Sigmoid colon (tissue), 7 donors: ENCODE measurements at regions of chr4 and their contacts with region 1.

Region 1: DNA sequence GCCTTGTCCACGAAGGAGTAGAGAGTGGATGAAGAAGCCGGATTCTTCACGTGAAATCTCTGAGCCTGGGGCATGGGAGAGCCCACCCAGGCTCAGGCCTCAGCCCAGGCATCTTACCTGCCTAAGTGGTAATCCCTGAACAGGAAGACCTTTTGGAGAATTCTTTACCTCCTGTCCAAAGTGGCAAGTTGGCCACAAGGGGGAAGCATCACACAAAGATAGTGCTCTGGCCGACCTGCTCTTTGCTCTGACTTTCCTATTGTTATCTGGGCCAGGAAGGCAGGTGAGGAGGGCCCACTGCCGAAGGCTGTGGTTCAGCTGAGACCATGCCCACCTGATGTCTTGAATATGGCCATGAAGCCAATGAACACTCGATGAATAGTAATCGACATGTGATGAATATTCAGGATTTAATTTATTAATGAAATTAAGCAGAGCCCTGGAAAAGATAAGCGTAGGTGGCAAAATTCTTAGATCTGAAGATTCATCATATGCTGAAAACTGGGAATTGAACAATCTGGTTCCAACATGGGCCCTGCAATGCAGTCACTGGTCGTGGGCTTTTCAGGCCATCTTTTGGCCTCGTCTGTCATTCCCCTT is 93.8 kb downstream of the PDGFRA start:
- DNase-seq: no peak
- H3K4me3 ChIP-seq: no peak overlapping the region
- H3K27ac ChIP-seq: no peak overlapping the region
- H3K4me1 ChIP-seq: no peaks in the 10 kb centered on the region
- H3K27me3 ChIP-seq: no peaks in the 10 kb centered on the region
- CTCF ChIP-seq: peak in 3 of 4 experiments; percentile 31 to 62 (median 45)
- EP300 ChIP-seq: no peak
- POLR2A ChIP-seq: no peak

Region 2: DNA sequence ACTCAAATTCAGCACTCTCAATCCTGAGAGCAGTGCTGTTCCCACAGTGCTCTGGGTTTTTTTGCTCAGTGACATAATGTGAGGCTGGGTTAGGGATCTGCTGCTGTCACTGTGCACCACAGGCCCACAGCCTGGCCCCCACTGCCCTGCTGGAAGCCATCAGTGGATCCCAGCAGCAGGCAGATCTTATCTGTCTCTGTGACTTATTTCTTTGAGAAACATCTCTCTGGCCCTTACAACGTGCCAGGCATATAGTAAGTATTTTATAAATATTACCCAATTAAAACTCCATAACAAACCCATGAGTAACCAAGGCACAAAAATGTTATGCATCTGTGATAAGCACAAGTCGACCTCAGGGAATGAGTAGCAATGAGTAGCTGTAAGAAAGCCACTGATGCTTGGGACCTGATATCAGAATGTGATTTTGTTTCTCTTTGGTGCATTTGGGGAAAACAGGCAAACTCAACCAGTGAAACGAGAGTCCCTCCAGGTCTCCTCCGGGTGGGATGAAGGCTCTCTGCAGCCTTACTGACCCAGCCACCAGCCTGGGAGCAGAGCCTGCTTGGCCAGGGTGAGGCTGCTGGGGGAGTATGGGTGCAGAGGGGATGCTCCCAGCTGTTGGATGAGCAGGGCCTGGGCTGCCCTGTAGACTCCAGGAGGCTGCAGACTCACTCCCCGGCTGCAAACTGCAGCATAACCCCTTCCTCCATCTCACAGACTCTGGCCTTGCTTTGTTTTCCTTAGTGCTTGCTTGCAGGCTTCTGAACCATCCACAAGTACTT is 558.9 kb before region 1 on chr4:
- intact Hi-C with region 1: no loop called
- DNase-seq: no peak
- H3K4me3 ChIP-seq: no peak overlapping the region
- H3K27ac ChIP-seq: peak overlapping the region in 2 of 4 donors; percentile 32 to 50
- H3K4me1 ChIP-seq: peaks cover 0 to 19% (median 14%) of the 10 kb centered on the region in 4 donors
- H3K27me3 ChIP-seq: no peaks in the 10 kb centered on the region
- CTCF ChIP-seq: no peak
- EP300 ChIP-seq: no peak
- POLR2A ChIP-seq: no peak

Region 3: DNA sequence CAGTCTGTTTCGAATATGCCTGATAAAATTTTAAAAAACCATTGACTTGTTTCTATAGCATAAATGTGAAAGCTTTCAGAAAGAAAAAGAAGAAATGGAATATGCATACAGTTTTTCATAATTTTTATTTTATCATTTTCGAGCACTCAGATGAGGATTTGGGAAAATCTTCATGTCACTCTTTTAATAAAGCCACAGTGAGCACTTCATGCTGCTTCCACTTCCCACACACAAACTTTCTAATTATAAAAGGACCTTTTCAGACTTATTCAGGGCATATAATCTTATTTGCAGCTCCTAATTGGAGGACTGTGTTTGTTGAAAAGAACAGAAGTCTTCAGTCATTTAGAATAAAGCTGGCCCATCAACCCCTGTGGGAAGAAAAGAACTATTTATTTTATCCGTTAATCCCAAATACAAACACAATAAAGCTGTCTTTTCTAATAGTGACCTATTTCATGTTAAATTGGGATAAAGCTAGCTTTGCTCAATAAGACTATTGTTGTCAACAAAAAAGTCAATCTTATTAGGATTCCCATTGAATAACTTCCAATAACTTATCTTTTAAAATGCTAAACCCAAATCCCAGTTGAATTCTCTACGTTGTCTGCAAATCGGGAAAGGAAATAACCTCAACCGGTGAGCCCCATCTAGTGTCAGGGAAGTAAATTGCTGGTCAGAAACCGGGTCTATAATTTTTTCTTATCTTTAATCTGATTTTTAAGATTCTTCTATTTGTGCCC is 117.6 kb after region 1 on chr4:
- intact Hi-C with region 1: loop called (anchors 2 kb)
- DNase-seq: no peak
- H3K4me3 ChIP-seq: peak overlapping the region in 2 of 4 donors; percentile 7 to 11
- H3K27ac ChIP-seq: peak overlapping the region in 2 of 4 donors; percentile 3 to 23
- H3K4me1 ChIP-seq: no peaks in the 10 kb centered on the region
- H3K27me3 ChIP-seq: no peaks in the 10 kb centered on the region
- CTCF ChIP-seq: peak in 3 of 4 experiments; percentile 6 to 58 (median 30)
- EP300 ChIP-seq: no peak
- POLR2A ChIP-seq: no peak